Calu3 (cell line): ENCODE measurements at regions of chr19 and their contacts with region 1.

Region 1: DNA sequence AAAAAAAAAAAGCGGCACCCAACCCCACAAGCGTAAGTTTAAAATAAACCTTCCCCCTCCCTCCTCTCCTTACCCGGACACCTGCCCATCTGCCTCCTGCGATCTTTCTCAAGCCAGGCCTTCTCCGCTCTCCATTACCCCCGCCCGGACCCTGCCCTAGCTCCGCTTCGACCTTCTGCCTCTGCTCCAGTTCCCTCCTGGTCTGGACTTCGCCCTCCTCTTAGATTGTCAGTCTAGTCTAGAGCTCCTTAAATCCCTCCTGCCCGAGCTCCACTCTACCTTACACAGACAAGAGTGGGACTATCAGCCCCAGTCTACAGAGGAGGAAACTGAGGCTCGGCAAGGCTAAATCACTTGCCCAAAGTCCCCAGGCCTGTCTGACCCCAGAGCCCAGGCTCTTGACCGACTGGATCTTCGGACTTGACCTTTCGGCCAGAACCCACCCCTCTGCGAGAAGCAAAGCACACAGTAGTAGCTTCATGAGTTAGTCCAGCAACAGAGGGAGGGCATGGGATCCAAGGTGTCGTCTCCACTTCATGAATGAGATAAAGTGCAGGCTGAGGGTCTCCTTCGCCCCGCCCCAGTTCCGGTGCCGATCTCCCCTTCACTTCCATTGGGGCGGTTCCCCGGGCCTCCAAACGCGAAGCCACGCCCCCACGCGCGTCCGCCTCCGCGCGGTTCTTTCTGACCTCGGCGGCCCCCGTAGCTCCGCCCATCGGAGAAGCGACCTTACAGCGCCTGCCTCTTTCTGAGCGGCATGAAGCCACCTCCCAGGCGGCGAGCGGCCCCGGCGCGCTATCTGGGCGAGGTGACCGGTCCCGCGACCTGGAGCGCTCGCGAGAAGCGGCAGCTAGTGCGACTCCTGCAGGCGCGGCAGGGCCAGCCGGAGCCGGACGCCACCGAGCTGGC is at the start of gene SNAPC2:
- DNase-seq: peak; percentile 94
- H3K4me3 Mint-ChIP-seq: peak within 1 kb of the TSS; percentile 76
- H3K27ac Mint-ChIP-seq: peak within 1 kb of the TSS; percentile 42
- H3K4me1 Mint-ChIP-seq: peaks cover 8% of the 10 kb centered on the region
- H3K27me3 Mint-ChIP-seq: no peaks in the 10 kb centered on the region
- CTCF ChIP-seq: no peak
- total RNA-seq, gene SNAPC2: 12.1 and 16.4 TPM in 2 replicates

Region 2: DNA sequence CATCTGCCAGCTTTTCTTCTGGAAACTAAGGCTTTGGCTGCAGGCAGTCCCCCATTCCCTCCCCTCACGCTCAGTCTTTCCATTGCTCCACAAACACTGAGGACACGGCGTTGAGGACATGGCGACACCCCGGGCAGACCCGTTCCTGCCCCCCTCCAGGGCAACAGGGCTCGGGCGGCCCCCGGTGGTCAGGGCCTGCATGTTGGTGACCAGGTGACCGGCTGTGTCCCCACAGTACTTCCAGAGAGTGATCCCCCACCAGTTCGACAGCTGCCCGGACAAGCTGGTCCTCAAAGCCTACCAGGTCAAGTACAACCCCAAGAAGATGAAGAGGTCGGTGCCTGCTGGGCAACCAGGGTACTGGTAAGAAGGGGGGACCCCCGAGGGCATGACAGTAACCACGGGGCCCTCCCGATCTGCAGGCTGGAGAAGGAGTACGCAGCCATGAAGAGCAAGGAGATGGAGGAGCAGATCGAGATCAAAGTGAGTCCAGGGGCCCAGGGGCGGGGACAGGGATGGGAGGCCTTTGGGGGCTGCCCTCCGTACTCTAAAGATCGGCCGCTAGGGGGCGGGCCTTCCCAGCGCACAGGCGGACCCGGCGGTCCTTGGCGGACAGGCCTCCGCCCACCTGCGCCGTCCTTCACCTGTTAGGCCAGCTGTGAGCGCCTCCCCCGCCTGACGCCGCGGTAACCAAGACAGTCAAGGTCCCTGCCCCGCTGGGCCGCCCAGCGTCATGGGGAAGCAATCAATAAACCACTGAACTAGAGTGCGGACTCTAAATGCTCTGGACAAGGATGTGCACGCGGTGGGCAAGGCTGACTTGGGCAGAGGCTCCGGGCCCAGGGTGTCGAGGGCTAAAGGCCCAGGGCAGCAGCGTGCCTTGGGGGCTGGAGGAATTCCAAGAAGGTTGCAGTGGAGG is 66.8 kb before region 1 on chr19:
- CTCF ChIA-PET with region 1: interaction called, 18 read pairs
- intact Hi-C with region 1: no loop called
- DNase-seq: peak; percentile 93
- H3K4me3 Mint-ChIP-seq: peak overlapping the region; percentile 63
- H3K27ac Mint-ChIP-seq: peak overlapping the region; percentile 67
- H3K4me1 Mint-ChIP-seq: peaks cover 13% of the 10 kb centered on the region
- H3K27me3 Mint-ChIP-seq: no peaks in the 10 kb centered on the region
- CTCF ChIP-seq: peak; percentile 85

Region 3: DNA sequence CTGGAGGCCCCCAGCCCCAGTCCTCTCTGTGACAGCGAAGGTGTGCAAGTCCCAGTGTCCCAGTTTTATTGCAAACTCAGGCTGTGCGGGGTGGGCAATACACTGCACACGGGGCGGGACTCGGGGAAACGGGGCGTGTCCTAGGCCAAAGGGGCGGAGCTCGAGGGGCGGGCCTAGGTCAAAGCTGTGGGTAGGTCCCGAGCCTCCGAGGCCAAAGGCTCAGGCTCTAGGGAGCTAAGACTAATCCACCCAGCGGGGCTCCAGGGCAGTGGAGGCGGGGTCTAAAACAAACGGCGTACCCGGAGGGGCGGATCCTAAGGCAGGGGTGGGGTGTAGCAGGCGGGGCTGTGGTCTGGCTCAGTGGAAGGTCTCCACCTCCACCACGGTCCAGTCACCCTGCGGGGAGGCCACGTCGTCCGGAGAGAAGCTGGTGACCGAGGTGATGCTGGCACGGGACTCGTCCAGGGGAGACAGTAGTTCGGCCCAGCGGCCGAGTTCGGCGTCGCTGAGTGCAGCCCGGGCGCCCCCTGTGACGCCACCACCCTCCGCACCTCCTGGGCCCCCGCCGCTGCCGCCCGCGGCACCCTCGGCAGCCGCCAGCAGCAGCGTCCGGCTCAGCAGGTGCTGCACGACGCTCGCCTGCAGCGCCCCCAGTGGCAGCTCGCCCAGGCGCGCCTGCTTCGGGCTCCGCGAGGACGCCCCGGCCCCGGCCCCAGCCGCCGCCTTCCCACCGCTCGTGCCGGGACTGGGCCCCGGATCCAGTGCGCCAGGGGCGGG is 51.0 kb before region 1 on chr19:
- CTCF ChIA-PET with region 1: interaction called, 11 read pairs
- intact Hi-C with region 1: no loop called
- DNase-seq: peak; percentile 70
- H3K4me3 Mint-ChIP-seq: peak overlapping the region; percentile 56
- H3K27ac Mint-ChIP-seq: no peak overlapping the region
- H3K4me1 Mint-ChIP-seq: peaks cover 17% of the 10 kb centered on the region
- H3K27me3 Mint-ChIP-seq: no peaks in the 10 kb centered on the region
- CTCF ChIP-seq: peak; percentile 45

Region 4: GRCh38 chr19:7943444-7944176 is 23.7 kb after region 1 on chr19 and contains the start of gene TIMM44:
- CTCF ChIA-PET with region 1: interaction called, 13 read pairs
- intact Hi-C with region 1: no loop called
- DNase-seq: peak; percentile 97
- H3K4me3 Mint-ChIP-seq: peak within 1 kb of the TSS; percentile 91
- H3K27ac Mint-ChIP-seq: peak within 1 kb of the TSS; percentile 93
- H3K4me1 Mint-ChIP-seq: peaks cover 20% of the 10 kb centered on the region
- H3K27me3 Mint-ChIP-seq: no peaks in the 10 kb centered on the region
- CTCF ChIP-seq: no peak
- total RNA-seq, gene TIMM44: 55.0 and 57.8 TPM in 2 replicates

Region 5: DNA sequence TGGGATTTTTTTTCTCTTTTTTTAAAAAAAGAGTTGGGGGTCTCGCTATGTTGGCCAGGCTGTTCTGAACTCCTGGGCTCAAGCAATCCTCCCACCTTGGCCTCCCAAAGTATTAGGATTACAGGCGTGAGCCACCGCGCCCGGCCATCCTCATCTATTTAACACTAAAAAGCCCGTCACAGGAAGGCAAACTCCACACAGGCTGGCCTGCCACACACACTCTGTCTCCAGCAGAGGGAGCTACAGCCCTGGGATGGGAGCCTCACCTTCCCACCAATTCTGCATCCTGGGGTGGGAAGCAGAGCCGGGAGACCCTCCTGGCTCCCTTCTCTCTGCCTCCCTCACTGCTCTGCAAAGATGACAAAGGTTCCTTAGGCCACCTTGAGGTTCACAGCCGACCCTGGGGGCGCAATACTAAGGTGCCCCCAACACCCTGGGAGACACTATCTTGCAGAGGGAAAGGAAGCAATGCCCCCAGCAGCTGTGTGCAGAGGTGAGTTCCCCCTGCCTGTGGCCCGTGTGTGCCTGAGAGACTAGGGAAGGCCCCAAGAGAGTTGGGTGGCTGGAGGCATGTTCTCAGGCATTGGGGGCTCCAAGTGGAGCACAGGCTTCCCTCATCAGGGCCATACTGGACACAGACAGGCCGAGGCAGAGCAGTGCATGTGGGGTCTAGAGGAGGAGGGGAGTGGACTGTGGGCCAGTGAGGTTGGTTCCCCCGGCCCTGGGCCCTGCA is 51.0 kb after region 1 on chr19:
- CTCF ChIA-PET with region 1: no interaction called
- intact Hi-C with region 1: no loop called
- DNase-seq: peak; percentile 46
- H3K4me3 Mint-ChIP-seq: no peak overlapping the region
- H3K27ac Mint-ChIP-seq: no peak overlapping the region
- H3K4me1 Mint-ChIP-seq: no peaks in the 10 kb centered on the region
- H3K27me3 Mint-ChIP-seq: no peaks in the 10 kb centered on the region
- CTCF ChIP-seq: peak; percentile 59